ENCODE measurements at regions of chr12 and their contacts with region 1.

Region 1: GRCh38 chr12:4164559-4165558 is 108.7 kb upstream of the CCND2 start:
- H3K4me3 Mint-ChIP-seq: peak overlapping the region; percentile 73
- H3K27ac Mint-ChIP-seq: no peak overlapping the region
- H3K4me1 Mint-ChIP-seq: peaks cover 32% of the 10 kb centered on the region
- H3K27me3 Mint-ChIP-seq: peaks cover 56% of the 10 kb centered on the region

Region 2: DNA sequence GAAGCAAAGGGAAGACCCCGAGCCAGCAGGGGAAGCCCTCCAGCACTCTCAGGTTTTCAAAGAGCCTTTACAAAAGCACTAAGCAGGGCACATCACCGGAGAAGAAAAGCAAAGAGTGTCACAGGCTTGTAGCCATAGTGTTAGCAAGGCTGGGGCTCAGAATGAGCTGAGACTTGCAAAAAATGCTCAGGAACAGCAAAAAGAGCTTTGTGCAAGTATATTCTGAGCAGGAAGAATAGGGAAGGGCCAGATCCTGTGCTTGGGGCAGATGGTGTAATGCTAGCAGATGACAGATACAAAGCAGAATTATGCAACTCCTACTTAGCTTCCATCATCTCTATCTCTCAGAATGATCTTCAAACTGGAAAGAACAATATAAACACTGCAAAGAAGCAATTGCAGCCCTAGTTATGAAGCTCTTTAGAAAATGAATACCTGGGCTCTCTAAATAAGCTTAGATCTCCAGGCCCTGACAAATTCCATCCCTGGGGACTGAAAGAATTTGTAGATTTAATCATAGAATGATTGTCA is 268.0 kb before region 1 on chr12:
- intact Hi-C with region 1: no loop called
- H3K4me3 Mint-ChIP-seq: peak overlapping the region; percentile 28
- H3K27ac Mint-ChIP-seq: peak overlapping the region; percentile 94
- H3K4me1 Mint-ChIP-seq: peaks cover 11% of the 10 kb centered on the region
- H3K27me3 Mint-ChIP-seq: no peaks in the 10 kb centered on the region

Region 3: DNA sequence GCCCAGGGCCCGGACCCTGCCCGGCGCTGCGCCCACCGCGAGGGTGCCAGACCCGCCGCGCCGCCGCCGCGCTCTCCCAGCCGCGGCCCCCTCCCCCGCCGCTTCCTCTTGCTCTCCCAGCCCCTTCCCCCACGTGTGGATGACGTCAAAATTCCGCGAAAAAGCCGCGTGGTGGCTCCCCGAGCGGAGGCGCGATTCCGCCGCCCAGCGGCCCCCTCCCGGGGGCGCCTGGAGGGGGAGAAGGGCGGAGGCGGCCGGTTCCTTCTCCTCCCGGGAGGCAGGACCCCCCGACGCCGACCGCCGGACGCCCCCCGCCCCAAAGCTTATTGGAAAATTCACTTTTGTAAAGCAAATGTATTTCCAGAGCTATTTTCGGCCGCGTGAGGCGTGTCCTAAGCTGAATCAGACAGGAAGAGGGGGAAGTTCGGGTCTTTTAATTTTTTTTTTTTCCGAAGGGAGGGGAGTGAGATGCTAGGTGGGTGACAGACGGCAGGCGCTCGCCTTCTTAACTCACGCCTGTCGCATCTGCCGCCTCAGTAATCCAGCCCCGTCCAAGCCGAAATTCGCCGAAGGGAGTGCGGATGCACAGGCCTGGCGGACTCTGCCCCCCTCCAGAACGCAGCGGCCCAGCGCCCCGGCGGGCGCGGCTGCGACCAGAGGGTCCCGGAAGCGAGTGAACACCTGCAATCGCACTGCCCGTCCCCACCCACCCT is 104.6 kb after region 1 on chr12:
- intact Hi-C with region 1: loop called (anchors 5 kb)
- H3K4me3 Mint-ChIP-seq: peak overlapping the region; percentile 81
- H3K27ac Mint-ChIP-seq: peak overlapping the region; percentile 89
- H3K4me1 Mint-ChIP-seq: peaks cover 50% of the 10 kb centered on the region
- H3K27me3 Mint-ChIP-seq: peaks cover 79% of the 10 kb centered on the region

Measured in dendritic cell treated with granulocyte-macrophage colony-stimulating factor and Interleukin-4, amounts not matched to agents 40 ng/mL and 50 ng/mL, for 4 days (primary cell).